ENCODE measurements at regions of chr16 and their contacts with region 1.

Region 1: GRCh38 chr16:740764-741505 is at the start of gene CIAO3:
- DNase-seq: peak; percentile 98
- ATAC-seq: peak; percentile 89
- H3K4me3 Mint-ChIP-seq: peak within 1 kb of the TSS; percentile 83
- H3K27ac Mint-ChIP-seq: no peak within 1 kb of the TSS
- H3K4me1 Mint-ChIP-seq: peaks cover 32% of the 10 kb centered on the region
- H3K27me3 Mint-ChIP-seq: no peaks in the 10 kb centered on the region
- CTCF ChIP-seq: peak; percentile 54
- total RNA-seq, gene CIAO3: 42.4 and 43.1 TPM in 2 replicates

Region 2: GRCh38 chr16:297832-298417 is 443.0 kb before region 1 on chr16:
- CTCF ChIA-PET with region 1: no interaction called
- POLR2A ChIA-PET with region 1: no interaction called
- intact Hi-C with region 1: no loop called
- DNase-seq: no peak
- ATAC-seq: no peak
- H3K4me3 Mint-ChIP-seq: no peak overlapping the region
- H3K27ac Mint-ChIP-seq: no peak overlapping the region
- H3K4me1 Mint-ChIP-seq: no peaks in the 10 kb centered on the region
- H3K27me3 Mint-ChIP-seq: no peaks in the 10 kb centered on the region
- CTCF ChIP-seq: no peak

Region 3: GRCh38 chr16:589658-590159 is 151.2 kb before region 1 on chr16 and contains the start of gene RAB40C:
- CTCF ChIA-PET with region 1: no interaction called
- POLR2A ChIA-PET with region 1: no interaction called
- intact Hi-C with region 1: loop called (anchors 2 kb)
- DNase-seq: peak; percentile 96
- ATAC-seq: peak; percentile 86
- H3K4me3 Mint-ChIP-seq: peak within 1 kb of the TSS; percentile 99
- H3K27ac Mint-ChIP-seq: peak within 1 kb of the TSS; percentile 100
- H3K4me1 Mint-ChIP-seq: peaks cover 42% of the 10 kb centered on the region
- H3K27me3 Mint-ChIP-seq: no peaks in the 10 kb centered on the region
- CTCF ChIP-seq: no peak
- total RNA-seq, gene RAB40C: 10.5 and 13.1 TPM in 2 replicates

Region 4: DNA sequence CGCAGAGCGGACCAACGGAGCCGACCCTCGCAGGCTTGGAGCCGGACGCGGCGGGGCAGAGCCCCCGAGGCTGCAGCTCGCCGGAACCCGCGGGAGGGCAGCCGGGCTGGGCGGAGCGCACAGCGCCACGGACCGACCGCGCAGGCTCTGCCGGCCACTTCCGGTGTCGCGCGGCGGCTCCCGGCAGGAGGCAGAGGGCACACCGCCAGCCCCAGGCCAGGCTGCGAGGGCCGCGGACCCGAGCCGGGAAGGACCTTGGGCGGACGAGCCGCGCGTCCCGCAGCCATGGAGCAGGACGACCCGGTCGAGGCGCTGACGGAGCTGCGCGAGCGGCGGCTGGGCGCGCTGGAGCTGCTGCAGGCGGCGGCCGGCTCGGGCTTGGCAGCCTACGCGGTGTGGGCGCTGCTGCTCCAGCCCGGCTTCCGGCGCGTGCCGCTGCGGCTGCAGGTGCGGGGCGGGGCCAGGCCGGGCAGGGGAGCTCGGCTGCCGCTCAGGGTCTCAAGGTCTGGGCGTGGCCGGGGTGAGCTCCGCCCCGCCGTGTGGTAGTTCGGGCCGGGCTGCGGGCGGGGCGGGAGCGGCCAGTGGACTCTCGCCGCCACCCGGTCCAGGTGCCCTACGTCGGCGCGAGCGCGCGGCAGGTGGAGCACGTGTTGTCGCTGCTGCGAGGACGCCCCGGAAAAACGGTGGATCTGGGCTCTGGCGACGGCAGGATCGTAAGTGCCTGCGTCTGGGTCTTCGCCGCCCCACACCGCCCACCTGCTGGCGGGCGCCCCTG is 19.8 kb before region 1 on chr16 and contains the start of gene ANTKMT:
- CTCF ChIA-PET with region 1: interaction called, 12 read pairs
- POLR2A ChIA-PET with region 1: interaction called, 31 read pairs
- intact Hi-C with region 1: no loop called
- DNase-seq: peak; percentile 89
- ATAC-seq: peak; percentile 90
- H3K4me3 Mint-ChIP-seq: peak within 1 kb of the TSS; percentile 80
- H3K27ac Mint-ChIP-seq: peak within 1 kb of the TSS; percentile 73
- H3K4me1 Mint-ChIP-seq: peaks cover 19% of the 10 kb centered on the region
- H3K27me3 Mint-ChIP-seq: peaks cover 3% of the 10 kb centered on the region
- CTCF ChIP-seq: no peak
- total RNA-seq, gene ANTKMT: 58.0 and 67.4 TPM in 2 replicates

Region 5: GRCh38 chr16:788394-789126 is 47.6 kb after region 1 on chr16 and contains the start of gene CHTF18:
- CTCF ChIA-PET with region 1: interaction called, 5 read pairs
- POLR2A ChIA-PET with region 1: interaction called, 3 read pairs
- intact Hi-C with region 1: loop called (anchors 2 kb)
- DNase-seq: peak; percentile 94
- ATAC-seq: peak; percentile 97
- H3K4me3 Mint-ChIP-seq: peak within 1 kb of the TSS; percentile 86
- H3K27ac Mint-ChIP-seq: peak within 1 kb of the TSS; percentile 56
- H3K4me1 Mint-ChIP-seq: peaks cover 7% of the 10 kb centered on the region
- H3K27me3 Mint-ChIP-seq: no peaks in the 10 kb centered on the region
- CTCF ChIP-seq: no peak
- total RNA-seq, gene CHTF18: 42.4 and 45.5 TPM in 2 replicates

Measured in activated B cell treated with CpG ODN at 0.5 μM for 24 hours (primary cell).